ENCODE measurements at regions of chr12 and their contacts with region 1.

Region 1: DNA sequence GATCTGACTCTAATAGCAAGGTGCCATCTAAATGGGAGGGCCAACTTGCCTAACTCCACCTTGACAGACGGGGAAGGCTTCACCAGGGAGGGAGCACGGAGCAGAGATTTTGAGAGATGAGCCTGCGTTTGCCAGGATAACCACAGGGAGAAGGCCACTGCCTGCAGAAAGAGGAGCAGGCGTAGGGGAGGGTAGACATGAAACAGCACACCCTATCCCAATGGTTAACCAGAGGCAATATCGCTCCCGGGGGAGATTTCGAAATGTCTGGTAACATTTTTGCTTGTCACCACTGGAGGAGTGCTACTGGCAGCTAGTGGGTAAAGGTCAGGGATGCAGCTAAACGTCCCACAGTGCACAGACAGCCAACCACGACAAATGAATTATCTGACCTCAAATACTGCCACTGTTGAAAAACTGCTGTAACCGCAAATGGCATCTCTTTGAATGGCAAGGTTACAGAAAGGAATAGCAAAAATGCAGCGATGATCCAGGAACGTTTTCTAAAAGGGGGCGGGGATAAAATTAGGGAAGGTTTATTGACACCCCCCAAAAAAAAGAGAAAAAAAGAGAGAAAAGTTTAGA is 126.0 kb upstream of the ATF7IP start:
- DNase-seq: peak in 5 of 14 experiments; percentile 8 to 66 (median 54)
- ATAC-seq: peak; percentile 62
- H3K4me3 ChIP-seq: peak overlapping the region; percentile 49
- H3K4me3 Mint-ChIP-seq: peak overlapping the region; percentile 88
- H3K27ac ChIP-seq: peak overlapping the region in 1 of 2 donors; percentile 18
- H3K27ac Mint-ChIP-seq: peak overlapping the region; percentile 87
- H3K4me1 ChIP-seq: peaks cover 19% of the 10 kb centered on the region
- H3K4me1 Mint-ChIP-seq: peaks cover 20% of the 10 kb centered on the region
- H3K27me3 ChIP-seq: no peaks in the 10 kb centered on the region
- H3K27me3 Mint-ChIP-seq: no peaks in the 10 kb centered on the region
- CTCF ChIP-seq: no peak

Region 2: DNA sequence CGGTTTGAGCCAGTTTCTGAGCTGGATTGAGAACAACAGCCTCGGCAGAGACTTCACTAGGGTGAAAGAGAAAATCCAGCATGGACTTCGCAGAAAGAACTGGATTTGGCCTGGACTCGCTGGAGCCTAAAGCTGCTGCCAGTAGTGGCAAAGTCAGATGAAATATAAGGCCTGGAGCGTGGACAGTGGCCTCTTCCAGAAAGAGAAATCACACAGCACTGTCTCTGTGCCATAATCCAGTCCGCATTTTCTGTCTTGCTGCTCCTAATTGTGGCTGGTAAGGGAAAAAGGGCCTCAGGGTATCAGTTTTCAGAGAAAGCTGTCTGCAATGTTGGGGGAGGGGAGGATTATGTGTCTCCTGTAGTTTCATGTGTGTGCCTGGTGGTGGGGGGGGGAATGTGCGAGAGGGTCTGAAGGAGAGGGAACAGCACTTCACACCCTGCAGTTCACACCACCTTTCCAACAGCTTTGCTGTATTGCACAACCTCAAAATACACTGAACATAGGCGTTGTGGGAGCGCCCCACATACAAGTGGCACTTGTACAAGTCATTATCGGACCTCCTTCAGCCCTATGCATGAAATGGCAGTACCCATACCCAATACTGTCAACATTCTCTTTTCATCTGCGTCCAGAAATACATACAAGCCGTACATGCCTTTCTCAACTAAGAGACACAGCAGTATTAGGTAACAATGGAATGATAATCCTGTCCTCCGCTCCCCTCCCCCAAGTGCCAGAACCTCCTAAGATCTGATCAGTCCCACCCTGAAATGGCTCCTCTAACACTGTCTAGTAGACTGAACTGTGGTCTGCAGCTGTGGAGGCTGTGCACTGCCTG is 18.5 kb after region 1 on chr12:
- CTCF ChIA-PET with region 1: interaction called, 6 read pairs
- POLR2A ChIA-PET with region 1: interaction called, 12 read pairs
- intact Hi-C with region 1: loop called in 1 of 2 experiments (anchors 1 kb)
- DNase-seq: peak; percentile 57 to 95 (median 68)
- ATAC-seq: peak; percentile 54
- H3K4me3 ChIP-seq: peak overlapping the region; percentile 21
- H3K4me3 Mint-ChIP-seq: peak overlapping the region; percentile 83
- H3K27ac ChIP-seq: peak overlapping the region; percentile 68 to 84
- H3K27ac Mint-ChIP-seq: peak overlapping the region; percentile 98
- H3K4me1 ChIP-seq: peaks cover 43% of the 10 kb centered on the region
- H3K4me1 Mint-ChIP-seq: peaks cover 55% of the 10 kb centered on the region
- H3K27me3 ChIP-seq: no peaks in the 10 kb centered on the region
- H3K27me3 Mint-ChIP-seq: no peaks in the 10 kb centered on the region
- CTCF ChIP-seq: no peak

Region 3: DNA sequence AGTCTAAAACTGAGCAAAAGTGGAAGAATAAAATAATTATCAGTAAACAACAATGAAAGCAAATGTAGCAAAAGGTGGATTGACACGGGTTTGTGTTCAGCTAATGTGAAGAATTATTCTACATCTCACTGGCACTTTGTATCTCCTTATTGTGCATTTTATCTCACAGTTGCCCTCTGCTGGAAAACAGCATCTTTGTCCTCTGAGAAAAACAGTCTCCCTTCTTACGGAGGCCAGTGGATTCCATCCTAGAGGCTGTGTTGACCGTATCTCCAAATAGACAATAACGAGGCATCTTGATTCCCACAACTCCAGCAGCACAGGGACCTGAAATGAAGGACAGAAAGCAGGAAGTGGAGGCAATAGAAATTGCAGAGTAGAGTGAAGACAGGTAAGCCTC is 379.5 kb after region 1 on chr12:
- CTCF ChIA-PET with region 1: interaction called, 3 read pairs
- POLR2A ChIA-PET with region 1: no interaction called
- intact Hi-C with region 1: loop called (anchors 1 kb)
- DNase-seq: peak in 4 of 14 experiments; percentile 17 to 39 (median 34)
- ATAC-seq: no peak
- H3K4me3 ChIP-seq: no peak overlapping the region
- H3K4me3 Mint-ChIP-seq: no peak overlapping the region
- H3K27ac ChIP-seq: no peak overlapping the region
- H3K27ac Mint-ChIP-seq: no peak overlapping the region
- H3K4me1 ChIP-seq: no peaks in the 10 kb centered on the region
- H3K4me1 Mint-ChIP-seq: peaks cover 4% of the 10 kb centered on the region
- H3K27me3 ChIP-seq: peaks cover 0 to under 1% of the 10 kb centered on the region in 2 experiments
- H3K27me3 Mint-ChIP-seq: peaks cover 32% of the 10 kb centered on the region
- CTCF ChIP-seq: peak; percentile 49

Region 4: GRCh38 chr12:14664510-14664909 is 425.1 kb after region 1 on chr12:
- CTCF ChIA-PET with region 1: interaction called, 3 read pairs
- POLR2A ChIA-PET with region 1: no interaction called
- intact Hi-C with region 1: loop called (anchors 1 to 2 kb)
- DNase-seq: peak in 10 of 14 experiments; percentile 11 to 74 (median 28)
- ATAC-seq: peak; percentile 97
- H3K4me3 ChIP-seq: no peak overlapping the region
- H3K4me3 Mint-ChIP-seq: no peak overlapping the region
- H3K27ac ChIP-seq: no peak overlapping the region
- H3K27ac Mint-ChIP-seq: no peak overlapping the region
- H3K4me1 ChIP-seq: no peaks in the 10 kb centered on the region
- H3K4me1 Mint-ChIP-seq: peaks cover 5% of the 10 kb centered on the region
- H3K27me3 ChIP-seq: peaks cover 0 to 2% of the 10 kb centered on the region in 2 experiments
- H3K27me3 Mint-ChIP-seq: peaks cover 6% of the 10 kb centered on the region
- CTCF ChIP-seq: peak; percentile 77

Region 5: GRCh38 chr12:14716848-14717444 is 477.5 kb after region 1 on chr12:
- CTCF ChIA-PET with region 1: no interaction called
- POLR2A ChIA-PET with region 1: no interaction called
- intact Hi-C with region 1: loop called (anchors 1 kb)
- DNase-seq: peak in 13 of 14 experiments; percentile 7 to 76 (median 27)
- ATAC-seq: peak; percentile 74
- H3K4me3 ChIP-seq: no peak overlapping the region
- H3K4me3 Mint-ChIP-seq: no peak overlapping the region
- H3K27ac ChIP-seq: no peak overlapping the region
- H3K27ac Mint-ChIP-seq: no peak overlapping the region
- H3K4me1 ChIP-seq: no peaks in the 10 kb centered on the region
- H3K4me1 Mint-ChIP-seq: no peaks in the 10 kb centered on the region
- H3K27me3 ChIP-seq: no peaks in the 10 kb centered on the region
- H3K27me3 Mint-ChIP-seq: no peaks in the 10 kb centered on the region
- CTCF ChIP-seq: peak; percentile 64

Region 6: GRCh38 chr12:15220994-15221885 is 981.8 kb after region 1 on chr12 and contains the start of gene RERG:
- CTCF ChIA-PET with region 1: no interaction called
- POLR2A ChIA-PET with region 1: no interaction called
- intact Hi-C with region 1: loop called in 1 of 2 experiments (anchors 10 kb)
- DNase-seq: peak; percentile 50 to 86 (median 68)
- ATAC-seq: peak; percentile 99
- H3K4me3 ChIP-seq: peak within 1 kb of the TSS; percentile 49
- H3K4me3 Mint-ChIP-seq: peak within 1 kb of the TSS; percentile 71
- H3K27ac ChIP-seq: no peak within 1 kb of the TSS
- H3K27ac Mint-ChIP-seq: no peak within 1 kb of the TSS
- H3K4me1 ChIP-seq: peaks cover 10% of the 10 kb centered on the region
- H3K4me1 Mint-ChIP-seq: peaks cover 13% of the 10 kb centered on the region
- H3K27me3 ChIP-seq: peaks cover 7 to 34% of the 10 kb centered on the region in 2 experiments
- H3K27me3 Mint-ChIP-seq: peaks cover 42% of the 10 kb centered on the region
- CTCF ChIP-seq: peak; percentile 94
- total RNA-seq, gene RERG: not detected